ENCODE measurements at regions of chr3 and their contacts with region 1.

Region 1: GRCh38 chr3:123015557-123015956 is 12.0 kb downstream of the SEMA5B start:
- DNase-seq: no peak
- ATAC-seq: no peak
- H3K4me3 ChIP-seq: no peak overlapping the region
- H3K4me3 Mint-ChIP-seq: no peak overlapping the region
- H3K27ac ChIP-seq: no peak overlapping the region
- H3K27ac Mint-ChIP-seq: no peak overlapping the region
- H3K4me1 ChIP-seq: no peaks in the 10 kb centered on the region
- H3K4me1 Mint-ChIP-seq: no peaks in the 10 kb centered on the region
- H3K27me3 ChIP-seq: peaks cover 0 to 6% (median 2%) of the 10 kb centered on the region in 4 experiments
- H3K27me3 Mint-ChIP-seq: peaks cover 28% of the 10 kb centered on the region
- CTCF ChIP-seq: no peak

Region 2: DNA sequence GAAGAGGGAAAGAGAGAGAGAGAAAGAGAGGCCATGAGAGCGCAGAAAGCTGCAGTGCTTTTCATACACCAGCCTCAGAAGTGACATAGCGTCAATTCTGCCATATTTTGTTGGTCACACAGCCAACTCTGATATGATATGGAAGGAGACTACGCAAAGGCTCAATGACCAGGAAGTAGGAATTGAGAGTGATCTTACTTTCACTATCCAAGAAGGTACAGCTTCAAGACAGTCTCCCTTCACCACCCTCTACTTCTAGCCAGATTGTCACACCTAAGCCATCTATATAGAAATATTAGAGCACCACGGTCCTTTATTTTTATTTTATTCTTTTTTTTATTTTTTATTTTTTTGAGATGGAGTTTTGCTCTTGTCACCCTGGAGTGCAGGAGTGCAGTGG is 417.0 kb before region 1 on chr3:
- CTCF ChIA-PET with region 1: no interaction called
- POLR2A ChIA-PET with region 1: no interaction called
- intact Hi-C with region 1: no loop called
- DNase-seq: no peak
- ATAC-seq: peak; percentile 53
- H3K4me3 ChIP-seq: no peak overlapping the region
- H3K4me3 Mint-ChIP-seq: peak overlapping the region; percentile 50
- H3K27ac ChIP-seq: peak overlapping the region in 1 of 2 donors; percentile 68
- H3K27ac Mint-ChIP-seq: peak overlapping the region; percentile 88
- H3K4me1 ChIP-seq: peaks cover 28 to 42% of the 10 kb centered on the region in 2 donors
- H3K4me1 Mint-ChIP-seq: peaks cover 61% of the 10 kb centered on the region
- H3K27me3 ChIP-seq: no peaks in the 10 kb centered on the region
- H3K27me3 Mint-ChIP-seq: no peaks in the 10 kb centered on the region
- CTCF ChIP-seq: no peak

Region 3: GRCh38 chr3:122754929-122755328 is 260.6 kb before region 1 on chr3:
- CTCF ChIA-PET with region 1: interaction called, 10 read pairs
- POLR2A ChIA-PET with region 1: no interaction called
- intact Hi-C with region 1: no loop called
- DNase-seq: peak; percentile 69
- ATAC-seq: peak; percentile 76
- H3K4me3 ChIP-seq: no peak overlapping the region
- H3K4me3 Mint-ChIP-seq: no peak overlapping the region
- H3K27ac ChIP-seq: no peak overlapping the region
- H3K27ac Mint-ChIP-seq: no peak overlapping the region
- H3K4me1 ChIP-seq: no peaks in the 10 kb centered on the region
- H3K4me1 Mint-ChIP-seq: no peaks in the 10 kb centered on the region
- H3K27me3 ChIP-seq: no peaks in the 10 kb centered on the region
- H3K27me3 Mint-ChIP-seq: no peaks in the 10 kb centered on the region
- CTCF ChIP-seq: peak; percentile 76

Region 4: GRCh38 chr3:122942937-122943827 is 72.4 kb before region 1 on chr3:
- CTCF ChIA-PET with region 1: interaction called, 16 read pairs
- POLR2A ChIA-PET with region 1: no interaction called
- intact Hi-C with region 1: no loop called
- DNase-seq: peak; percentile 35
- ATAC-seq: peak; percentile 49
- H3K4me3 ChIP-seq: no peak overlapping the region
- H3K4me3 Mint-ChIP-seq: no peak overlapping the region
- H3K27ac ChIP-seq: no peak overlapping the region
- H3K27ac Mint-ChIP-seq: no peak overlapping the region
- H3K4me1 ChIP-seq: peaks cover 15 to 21% of the 10 kb centered on the region in 2 donors
- H3K4me1 Mint-ChIP-seq: peaks cover 16% of the 10 kb centered on the region
- H3K27me3 ChIP-seq: peaks cover 0 to 5% (median 1%) of the 10 kb centered on the region in 4 experiments
- H3K27me3 Mint-ChIP-seq: no peaks in the 10 kb centered on the region
- CTCF ChIP-seq: peak; percentile 74

Region 5: DNA sequence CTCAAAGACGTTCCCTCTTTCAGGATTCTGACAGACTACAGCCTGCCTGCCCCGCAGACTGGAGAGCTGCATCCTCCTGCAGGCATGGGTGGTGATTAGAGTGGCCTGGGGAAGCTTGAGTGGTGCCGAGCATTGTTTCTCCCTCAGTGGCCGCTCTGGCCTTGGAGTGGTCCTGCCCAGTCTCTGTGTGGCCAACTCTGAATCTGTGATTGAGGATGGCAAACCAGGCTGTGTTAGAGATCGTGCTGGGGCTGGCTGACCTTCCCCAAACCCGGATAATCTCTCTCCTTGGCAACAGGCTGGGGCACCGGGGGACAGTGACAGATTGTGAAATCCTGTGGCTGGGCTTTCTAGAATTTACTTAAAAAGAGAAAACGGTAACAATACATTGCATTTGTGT is 444.3 kb after region 1 on chr3:
- CTCF ChIA-PET with region 1: no interaction called
- POLR2A ChIA-PET with region 1: no interaction called
- intact Hi-C with region 1: no loop called
- DNase-seq: no peak
- ATAC-seq: no peak
- H3K4me3 ChIP-seq: no peak overlapping the region
- H3K4me3 Mint-ChIP-seq: no peak overlapping the region
- H3K27ac ChIP-seq: no peak overlapping the region
- H3K27ac Mint-ChIP-seq: no peak overlapping the region
- H3K4me1 ChIP-seq: no peaks in the 10 kb centered on the region
- H3K4me1 Mint-ChIP-seq: no peaks in the 10 kb centered on the region
- H3K27me3 ChIP-seq: peaks cover 0 to 17% (median 2%) of the 10 kb centered on the region in 4 experiments
- H3K27me3 Mint-ChIP-seq: peaks cover 38% of the 10 kb centered on the region
- CTCF ChIP-seq: no peak